Spleen (tissue), 13 donors: ENCODE measurements at regions of chr1 and their contacts with region 1.

Region 1: DNA sequence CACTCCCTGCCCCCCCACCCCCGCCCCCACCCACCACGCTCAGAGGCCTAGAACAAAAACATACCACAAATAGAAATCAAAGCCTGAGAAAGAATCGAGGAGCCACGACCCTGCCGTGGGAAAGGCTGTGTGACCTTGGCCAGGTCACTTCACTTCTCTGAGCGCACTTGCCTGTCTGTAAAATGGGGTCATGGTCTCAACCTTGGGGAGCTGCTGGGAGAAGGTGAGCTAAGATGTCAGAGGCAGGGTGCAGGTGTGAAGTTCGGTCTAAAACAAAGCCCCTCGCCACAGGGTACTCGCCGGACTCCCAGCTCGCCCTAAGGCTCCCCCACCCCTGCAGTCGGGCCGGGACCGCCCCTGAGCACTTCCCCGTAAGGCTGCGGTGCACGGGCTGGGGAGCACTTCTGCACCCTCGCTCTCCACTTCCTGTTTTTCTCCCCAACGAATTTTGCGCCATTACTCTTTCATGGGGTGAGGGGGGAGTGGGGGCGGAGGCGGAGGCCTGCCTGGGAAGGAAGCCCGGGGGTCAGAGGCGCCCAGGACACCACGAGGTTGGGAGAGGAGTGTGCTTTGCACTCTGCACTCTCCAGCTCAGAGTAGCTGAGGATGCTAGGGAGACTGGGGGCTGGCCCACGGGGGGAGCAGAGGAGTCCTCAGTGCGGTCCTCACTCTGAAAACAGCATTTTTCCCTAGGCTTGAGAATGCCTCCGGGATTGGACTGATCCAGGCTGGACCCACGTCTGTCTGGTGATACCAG is 21.9 kb upstream of the PIK3CD start:
- DNase-seq: peak; percentile 98
- H3K4me3 ChIP-seq: peak overlapping the region; percentile 30 to 75 (median 50)
- H3K27ac ChIP-seq: peak overlapping the region; percentile 77 to 96 (median 90)
- H3K4me1 ChIP-seq: peaks cover 24 to 93% (median 58%) of the 10 kb centered on the region in 6 donors
- H3K27me3 ChIP-seq: peaks cover 0 to 10% (median 0%) of the 10 kb centered on the region in 7 donors
- CTCF ChIP-seq: peak in 2 of 11 experiments; percentile 21 to 28
- POLR2A ChIP-seq: no peak

Region 2: DNA sequence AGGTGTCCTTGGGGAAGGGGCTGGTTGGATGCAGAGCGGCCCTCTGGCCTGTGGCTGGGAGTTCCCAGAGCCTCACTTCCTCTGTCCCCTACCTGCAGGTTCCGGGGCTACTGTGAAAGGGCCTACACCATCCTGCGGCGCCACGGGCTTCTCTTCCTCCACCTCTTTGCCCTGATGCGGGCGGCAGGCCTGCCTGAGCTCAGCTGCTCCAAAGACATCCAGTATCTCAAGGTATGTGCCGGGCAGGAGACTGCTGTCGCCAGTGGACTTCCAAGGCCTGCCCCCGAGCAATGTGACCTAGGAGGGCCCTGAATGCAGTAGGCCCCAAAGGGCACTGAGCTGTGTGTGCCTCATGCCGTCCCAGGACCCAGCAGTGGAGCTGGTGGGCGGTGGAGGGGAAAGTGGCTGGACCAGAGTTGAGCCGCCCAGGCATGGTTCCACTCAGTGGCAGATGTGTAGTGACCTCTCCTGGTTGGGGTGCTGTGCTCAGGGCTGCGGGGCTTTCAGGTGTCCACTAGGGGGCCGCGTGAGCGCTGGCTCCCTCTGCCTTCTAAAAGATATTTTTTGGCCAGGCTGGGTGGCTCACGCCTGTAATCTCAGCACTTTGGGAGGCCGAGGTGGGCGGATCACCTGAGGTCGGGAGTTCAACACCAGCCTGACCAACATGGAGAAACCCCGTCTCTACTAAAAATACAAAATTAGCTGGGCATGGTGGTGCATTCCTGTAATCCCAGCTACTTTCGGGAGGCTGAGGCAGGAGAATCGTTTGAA is 95.3 kb after region 1 on chr1:
- intact Hi-C with region 1: loop called (anchors 5 kb)
- DNase-seq: peak; percentile 93
- H3K4me3 ChIP-seq: no peak overlapping the region
- H3K27ac ChIP-seq: peak overlapping the region in 6 of 8 donors; percentile 4 to 97 (median 32)
- H3K4me1 ChIP-seq: peaks cover 0 to 76% (median 31%) of the 10 kb centered on the region in 6 donors
- H3K27me3 ChIP-seq: peaks cover 0 to 5% (median 0%) of the 10 kb centered on the region in 7 donors
- CTCF ChIP-seq: peak; percentile 84 to 97 (median 90)
- POLR2A ChIP-seq: no peak